CD8-positive, alpha-beta memory T cell (primary cell): ENCODE measurements at regions of chr1 and their contacts with region 1.

Region 1: GRCh38 chr1:44002606-44003157 is 11.3 kb downstream of the CCDC24 start:
- DNase-seq: no peak
- H3K4me3 ChIP-seq: no peak overlapping the region
- H3K4me3 Mint-ChIP-seq: no peak overlapping the region
- H3K27ac ChIP-seq: no peak overlapping the region
- H3K27ac Mint-ChIP-seq: no peak overlapping the region
- H3K4me1 ChIP-seq: no peaks in the 10 kb centered on the region
- H3K4me1 Mint-ChIP-seq: no peaks in the 10 kb centered on the region
- H3K27me3 ChIP-seq: no peaks in the 10 kb centered on the region
- H3K27me3 Mint-ChIP-seq: peaks cover 0 to 5% of the 10 kb centered on the region in 2 donors

Region 2: GRCh38 chr1:43952731-43953346 is 49.8 kb before region 1 on chr1:
- CTCF ChIA-PET with region 1: no interaction called
- POLR2A ChIA-PET with region 1: no interaction called
- DNase-seq: no peak
- H3K4me3 ChIP-seq: no peak overlapping the region
- H3K4me3 Mint-ChIP-seq: peak overlapping the region in 1 of 7 donors; percentile 8
- H3K27ac ChIP-seq: no peak overlapping the region
- H3K27ac Mint-ChIP-seq: no peak overlapping the region
- H3K4me1 ChIP-seq: peaks cover 10% of the 10 kb centered on the region
- H3K4me1 Mint-ChIP-seq: peaks cover 19 to 34% (median 26%) of the 10 kb centered on the region in 3 donors
- H3K27me3 ChIP-seq: no peaks in the 10 kb centered on the region
- H3K27me3 Mint-ChIP-seq: peaks cover 0 to 1% of the 10 kb centered on the region in 2 donors

Region 3: DNA sequence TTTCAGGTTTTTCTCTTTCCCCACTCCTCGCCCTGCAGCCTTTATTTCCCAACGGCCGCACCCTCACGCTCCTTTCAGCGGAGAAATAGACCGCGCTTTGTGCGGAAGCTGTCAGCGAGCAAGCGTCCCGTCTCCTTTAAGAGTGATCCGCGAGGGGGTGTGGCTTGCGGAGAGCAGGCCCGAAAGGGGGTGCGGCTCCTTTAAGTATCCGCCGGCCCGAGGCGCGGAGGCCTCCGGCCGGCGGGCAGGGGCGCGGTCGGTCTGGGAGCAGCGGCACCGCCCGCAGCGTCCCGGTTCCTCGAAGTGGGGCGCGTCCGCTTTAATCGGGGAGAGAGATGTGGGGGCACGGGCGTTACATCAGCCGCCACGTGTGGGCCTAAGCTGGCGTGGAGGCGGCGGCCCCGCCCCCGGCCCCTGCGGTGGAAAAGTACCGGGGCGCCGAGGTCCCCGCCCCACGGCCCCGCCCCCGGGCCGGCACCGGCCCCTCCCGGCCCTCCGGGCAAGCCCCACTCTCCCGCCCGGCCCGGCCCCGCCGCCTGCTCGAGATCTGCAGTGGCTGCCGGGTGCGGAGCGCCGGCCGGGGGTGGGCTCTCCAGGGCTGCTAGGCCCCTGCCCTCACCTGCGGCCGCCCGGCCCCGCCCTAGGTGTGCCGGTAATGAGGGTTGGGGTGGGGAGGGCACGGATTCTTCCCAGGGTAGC is 27.4 kb after region 1 on chr1:
- CTCF ChIA-PET with region 1: interaction called, 108 read pairs
- POLR2A ChIA-PET with region 1: no interaction called
- DNase-seq: peak; percentile 77 to 89 (median 81)
- H3K4me3 ChIP-seq: peak overlapping the region; percentile 81
- H3K4me3 Mint-ChIP-seq: peak overlapping the region; percentile 75 to 98 (median 92)
- H3K27ac ChIP-seq: peak overlapping the region; percentile 64
- H3K27ac Mint-ChIP-seq: peak overlapping the region; percentile 77 to 97 (median 95)
- H3K4me1 ChIP-seq: peaks cover 8% of the 10 kb centered on the region
- H3K4me1 Mint-ChIP-seq: peaks cover 17 to 37% (median 20%) of the 10 kb centered on the region in 3 donors
- H3K27me3 ChIP-seq: no peaks in the 10 kb centered on the region
- H3K27me3 Mint-ChIP-seq: peaks cover 0 to 5% of the 10 kb centered on the region in 2 donors

Region 4: DNA sequence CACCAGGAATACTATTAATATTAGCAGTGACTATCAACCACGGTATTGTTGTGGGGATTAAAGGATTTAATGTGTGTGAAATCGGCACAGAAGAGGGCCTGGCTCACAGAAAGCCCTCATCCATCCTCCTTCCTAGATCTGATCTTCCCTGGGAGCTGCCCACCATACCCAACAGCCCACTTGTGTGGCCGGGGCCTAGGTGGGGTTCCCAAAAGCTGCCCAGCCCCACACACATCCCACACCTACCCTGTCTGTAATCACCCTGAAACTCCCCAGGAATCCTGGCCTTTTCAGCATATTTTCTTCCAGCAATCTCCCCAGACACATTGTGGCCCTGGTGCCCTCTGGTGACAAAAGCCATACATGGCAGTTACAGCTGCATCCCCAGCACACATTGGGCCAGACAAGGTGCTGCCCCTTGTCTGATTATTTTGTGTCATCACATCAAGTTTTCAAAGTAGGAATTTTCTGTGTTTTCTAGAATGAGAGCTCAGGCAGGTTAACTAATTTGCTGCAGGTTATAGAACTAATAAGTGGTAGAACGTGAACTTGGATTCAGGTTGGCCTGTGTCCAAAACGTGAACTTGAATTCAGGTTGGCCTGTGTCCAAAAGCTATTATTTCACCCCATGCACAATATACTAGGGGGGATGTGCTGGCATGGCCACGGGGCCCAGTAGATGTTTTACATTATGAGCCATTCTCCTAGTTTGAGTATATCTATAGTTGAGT is 33.9 kb after region 1 on chr1:
- CTCF ChIA-PET with region 1: interaction called, 108 read pairs
- POLR2A ChIA-PET with region 1: interaction called, 3 read pairs
- DNase-seq: peak; percentile 39 to 75 (median 55)
- H3K4me3 ChIP-seq: no peak overlapping the region
- H3K4me3 Mint-ChIP-seq: peak overlapping the region in 1 of 7 donors; percentile 15
- H3K27ac ChIP-seq: peak overlapping the region; percentile 30
- H3K27ac Mint-ChIP-seq: peak overlapping the region in 2 of 8 donors; percentile 12 to 17
- H3K4me1 ChIP-seq: no peaks in the 10 kb centered on the region
- H3K4me1 Mint-ChIP-seq: peaks cover 0 to 12% (median 11%) of the 10 kb centered on the region in 3 donors
- H3K27me3 ChIP-seq: no peaks in the 10 kb centered on the region
- H3K27me3 Mint-ChIP-seq: peaks cover 0 to 4% of the 10 kb centered on the region in 2 donors

Region 5: GRCh38 chr1:44044071-44044801 is 41.6 kb after region 1 on chr1:
- CTCF ChIA-PET with region 1: interaction called, 48 read pairs
- POLR2A ChIA-PET with region 1: no interaction called
- DNase-seq: no peak
- H3K4me3 ChIP-seq: no peak overlapping the region
- H3K4me3 Mint-ChIP-seq: no peak overlapping the region
- H3K27ac ChIP-seq: peak overlapping the region; percentile 4
- H3K27ac Mint-ChIP-seq: no peak overlapping the region
- H3K4me1 ChIP-seq: no peaks in the 10 kb centered on the region
- H3K4me1 Mint-ChIP-seq: peaks cover 0 to 7% (median 5%) of the 10 kb centered on the region in 3 donors
- H3K27me3 ChIP-seq: no peaks in the 10 kb centered on the region
- H3K27me3 Mint-ChIP-seq: peaks cover 10 to 34% of the 10 kb centered on the region in 2 donors

Region 6: DNA sequence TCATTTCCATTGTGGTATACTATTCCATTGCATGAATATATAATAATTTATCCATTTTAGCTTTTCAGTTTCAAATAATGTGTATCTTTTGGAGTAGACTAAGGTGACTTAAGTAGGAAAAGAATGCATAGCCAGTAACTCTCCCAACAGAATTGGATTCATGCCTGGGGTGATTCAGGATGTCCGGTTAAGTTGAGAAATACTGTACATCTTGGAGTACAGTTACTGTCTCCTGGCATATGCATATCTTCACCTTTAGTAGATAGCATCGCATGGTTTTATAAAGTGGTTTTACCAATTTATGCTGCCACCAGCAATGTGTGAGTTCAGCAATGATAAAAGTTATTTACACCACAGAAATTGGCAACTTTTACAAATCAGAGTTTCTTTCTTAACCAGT is 47.2 kb after region 1 on chr1:
- CTCF ChIA-PET with region 1: interaction called, 48 read pairs
- POLR2A ChIA-PET with region 1: no interaction called
- DNase-seq: no peak
- H3K4me3 ChIP-seq: no peak overlapping the region
- H3K4me3 Mint-ChIP-seq: no peak overlapping the region
- H3K27ac ChIP-seq: no peak overlapping the region
- H3K27ac Mint-ChIP-seq: no peak overlapping the region
- H3K4me1 ChIP-seq: no peaks in the 10 kb centered on the region
- H3K4me1 Mint-ChIP-seq: peaks cover 0 to 7% (median 5%) of the 10 kb centered on the region in 3 donors
- H3K27me3 ChIP-seq: no peaks in the 10 kb centered on the region
- H3K27me3 Mint-ChIP-seq: peaks cover 11 to 32% of the 10 kb centered on the region in 2 donors

Region 7: DNA sequence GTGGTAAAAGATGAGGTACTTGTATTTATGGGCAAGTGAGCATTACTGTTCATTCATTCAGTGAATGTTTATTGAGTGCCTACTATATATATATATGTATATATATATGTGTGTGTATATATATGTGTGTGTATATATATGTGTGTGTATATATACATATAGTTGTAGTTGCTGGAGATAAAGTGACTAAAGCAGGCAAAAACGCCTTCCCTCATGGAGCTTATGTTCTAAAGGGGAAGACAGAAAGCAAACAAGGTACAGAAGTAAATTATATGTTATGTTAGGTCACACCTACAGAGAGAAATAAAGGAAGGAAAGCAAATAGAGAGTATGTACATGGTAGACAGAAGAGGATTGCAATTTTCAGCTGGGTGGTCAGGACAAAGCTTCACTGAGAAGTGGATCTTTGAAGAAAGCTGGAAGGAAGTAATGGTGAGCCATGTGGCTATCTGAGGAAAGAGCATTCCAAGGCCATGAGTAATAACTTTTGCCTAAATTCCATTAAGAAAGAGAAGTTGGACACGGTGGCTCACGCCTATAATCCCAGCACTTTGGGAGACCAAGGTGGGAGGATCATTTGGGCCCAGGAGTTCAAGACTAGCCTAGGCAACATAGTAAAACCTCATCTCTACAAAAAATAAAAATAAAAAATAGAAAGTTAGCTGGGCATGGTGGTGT is 82.5 kb after region 1 on chr1:
- CTCF ChIA-PET with region 1: no interaction called
- POLR2A ChIA-PET with region 1: no interaction called
- DNase-seq: no peak
- H3K4me3 ChIP-seq: no peak overlapping the region
- H3K4me3 Mint-ChIP-seq: no peak overlapping the region
- H3K27ac ChIP-seq: no peak overlapping the region
- H3K27ac Mint-ChIP-seq: no peak overlapping the region
- H3K4me1 ChIP-seq: no peaks in the 10 kb centered on the region
- H3K4me1 Mint-ChIP-seq: no peaks in the 10 kb centered on the region
- H3K27me3 ChIP-seq: peaks cover 12% of the 10 kb centered on the region
- H3K27me3 Mint-ChIP-seq: peaks cover 20 to 63% of the 10 kb centered on the region in 2 donors